ENCODE measurements at regions of chr5 and their contacts with region 1.

Region 1: DNA sequence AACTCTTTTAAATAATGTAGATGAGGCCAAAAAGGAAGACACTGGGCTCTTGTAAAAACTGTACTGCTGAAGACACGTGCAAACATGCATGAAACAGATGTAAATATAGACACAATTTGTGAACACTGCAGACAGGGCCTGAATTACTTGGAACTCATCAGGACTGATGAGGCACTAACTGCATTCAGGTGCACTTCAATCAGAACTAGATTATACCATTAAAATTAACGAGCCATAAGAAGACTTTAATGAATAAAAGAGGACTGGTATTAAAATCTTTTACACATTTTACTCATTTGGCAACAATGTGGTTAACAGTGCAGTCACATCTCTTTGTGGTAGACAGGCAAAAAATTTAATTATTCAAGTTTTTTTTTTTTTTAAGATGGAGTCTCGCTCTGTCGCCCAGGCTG is 13.4 kb upstream of the ZCCHC9 start:
- DNase-seq: no peak
- H3K4me3 Mint-ChIP-seq: no peak overlapping the region
- H3K27ac Mint-ChIP-seq: no peak overlapping the region
- H3K4me1 Mint-ChIP-seq: peaks cover 8% of the 10 kb centered on the region
- H3K27me3 Mint-ChIP-seq: no peaks in the 10 kb centered on the region
- CTCF ChIP-seq: no peak

Region 2: GRCh38 chr5:81247441-81247972 is 40.5 kb before region 1 on chr5:
- CTCF ChIA-PET with region 1: interaction called, 5 read pairs
- POLR2A ChIA-PET with region 1: no interaction called
- intact Hi-C with region 1: loop called (anchors 10 kb)
- DNase-seq: no peak
- H3K4me3 Mint-ChIP-seq: no peak overlapping the region
- H3K27ac Mint-ChIP-seq: no peak overlapping the region
- H3K4me1 Mint-ChIP-seq: peaks cover 15% of the 10 kb centered on the region
- H3K27me3 Mint-ChIP-seq: no peaks in the 10 kb centered on the region
- CTCF ChIP-seq: no peak

Measured in MCF 10A (cell line).